Right ventricle myocardium inferior (tissue), 1 donor: ENCODE measurements at regions of chr15 and their contacts with region 1.

Region 1: DNA sequence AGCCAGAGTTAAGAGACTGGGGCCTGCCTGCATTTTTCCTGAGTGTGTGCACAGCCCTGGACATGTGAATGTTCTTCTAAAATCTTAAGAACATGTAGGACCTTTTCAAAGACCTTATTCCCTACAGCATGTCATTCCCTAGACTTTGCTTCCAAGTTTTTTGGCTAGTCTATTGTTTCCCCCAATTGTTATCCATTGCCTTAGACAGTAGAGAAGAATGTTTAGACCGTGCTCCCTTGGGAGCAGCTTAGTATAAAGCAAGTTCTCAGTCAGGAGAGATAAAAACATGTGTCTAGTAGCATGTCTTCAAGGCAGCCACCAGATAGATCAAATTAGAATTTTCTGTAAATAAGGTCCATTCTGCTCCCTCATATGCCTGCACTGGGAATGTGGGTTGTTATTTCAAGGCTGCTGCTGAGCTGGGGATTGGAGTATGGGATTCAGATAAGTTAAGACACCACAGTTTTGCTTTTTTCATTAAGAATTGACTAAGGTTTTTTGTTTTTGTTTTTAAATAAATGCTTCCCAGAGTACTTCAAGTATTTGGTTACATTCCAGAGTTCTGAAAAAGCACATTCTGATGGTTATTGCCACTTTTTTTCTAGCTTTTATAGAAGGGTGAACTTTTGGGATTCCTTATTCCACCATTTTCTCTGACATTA is 246.7 kb downstream of the RORA start:
- DNase-seq: no peak
- ATAC-seq: no peak

Region 2: GRCh38 chr15:60941444-60941843 is 40.9 kb before region 1 on chr15:
- intact Hi-C with region 1: no loop called
- DNase-seq: no peak
- ATAC-seq: no peak

Region 3: DNA sequence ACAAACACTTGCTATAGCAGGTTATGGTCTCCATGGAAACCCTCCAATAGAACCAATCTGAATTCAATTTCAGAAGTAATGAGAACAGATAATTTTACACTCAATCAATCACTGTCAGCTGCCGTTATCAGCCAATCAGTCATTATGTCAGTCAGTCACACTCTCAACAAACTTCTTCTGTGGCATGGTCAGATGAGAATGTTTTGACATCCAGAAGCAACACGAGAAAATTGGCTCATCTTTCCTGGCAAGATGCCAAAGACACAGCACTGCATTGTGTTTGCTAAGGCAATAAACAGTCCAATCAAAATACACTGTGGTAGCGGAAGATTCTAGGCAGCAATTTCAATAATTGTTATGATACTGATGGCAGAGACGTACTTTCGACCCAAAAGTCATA is 56.0 kb after region 1 on chr15:
- intact Hi-C with region 1: loop called (anchors 2 kb)
- DNase-seq: no peak
- ATAC-seq: peak; percentile 41

Region 4: GRCh38 chr15:61256219-61256618 is 273.8 kb after region 1 on chr15:
- intact Hi-C with region 1: no loop called
- DNase-seq: no peak
- ATAC-seq: no peak